ENCODE measurements at regions of chr14 and their contacts with region 1.

Region 1: DNA sequence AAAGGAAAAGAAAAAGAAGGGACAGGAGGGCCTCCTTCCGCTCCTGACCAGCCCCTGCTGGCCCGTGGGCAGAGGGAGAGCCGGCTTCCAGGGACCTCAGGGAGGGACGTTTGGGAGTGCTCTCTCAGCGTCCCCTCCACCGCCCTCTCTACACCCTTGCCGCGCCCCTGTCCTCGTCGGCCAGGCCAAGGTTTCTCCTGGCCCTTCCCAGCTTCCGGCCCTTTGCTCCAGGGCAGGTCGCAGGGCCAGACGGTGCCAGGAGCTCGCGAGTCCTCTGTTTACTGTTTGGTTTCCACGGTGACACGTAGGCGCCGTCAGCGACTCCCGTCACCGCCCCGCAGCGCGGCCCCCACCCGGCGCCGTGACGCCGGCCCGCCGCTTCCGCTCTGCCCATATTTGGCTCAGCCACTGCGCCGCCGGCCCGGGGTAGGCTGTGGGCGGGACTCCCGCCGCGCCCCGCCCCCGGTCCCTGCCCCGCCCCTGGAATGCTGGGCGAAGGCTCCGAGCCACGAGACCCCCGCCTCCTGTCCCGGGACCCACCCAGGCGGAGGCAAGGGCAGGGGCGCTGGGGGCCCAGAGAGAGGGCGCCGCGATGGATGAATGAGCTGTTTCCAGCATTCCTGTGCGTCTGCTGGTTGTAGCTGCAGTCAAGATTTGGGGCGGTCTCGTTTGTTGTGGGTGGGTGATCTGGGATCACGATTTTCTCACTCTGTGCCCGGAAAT is 15.5 kb downstream of the FOS start:
- DNase-seq: peak; percentile 97
- ATAC-seq: peak; percentile 90
- H3K4me3 ChIP-seq: peak overlapping the region; percentile 86
- H3K27ac ChIP-seq: peak overlapping the region; percentile 71
- H3K4me1 ChIP-seq: peaks cover 17% of the 10 kb centered on the region
- H3K27me3 ChIP-seq: no peaks in the 10 kb centered on the region
- CTCF ChIP-seq: no peak

Region 2: GRCh38 chr14:75002392-75003249 is 291.5 kb before region 1 on chr14 and contains the start of gene EIF2B2:
- CTCF ChIA-PET with region 1: no interaction called
- POLR2A ChIA-PET with region 1: no interaction called
- intact Hi-C with region 1: no loop called
- DNase-seq: peak; percentile 97
- ATAC-seq: peak; percentile 98
- H3K4me3 ChIP-seq: peak within 1 kb of the TSS; percentile 89
- H3K27ac ChIP-seq: peak within 1 kb of the TSS; percentile 25
- H3K4me1 ChIP-seq: peaks cover 28% of the 10 kb centered on the region
- H3K27me3 ChIP-seq: no peaks in the 10 kb centered on the region
- CTCF ChIP-seq: no peak
- total RNA-seq, gene EIF2B2: 96.8 and 113 TPM in 2 replicates

Region 3: DNA sequence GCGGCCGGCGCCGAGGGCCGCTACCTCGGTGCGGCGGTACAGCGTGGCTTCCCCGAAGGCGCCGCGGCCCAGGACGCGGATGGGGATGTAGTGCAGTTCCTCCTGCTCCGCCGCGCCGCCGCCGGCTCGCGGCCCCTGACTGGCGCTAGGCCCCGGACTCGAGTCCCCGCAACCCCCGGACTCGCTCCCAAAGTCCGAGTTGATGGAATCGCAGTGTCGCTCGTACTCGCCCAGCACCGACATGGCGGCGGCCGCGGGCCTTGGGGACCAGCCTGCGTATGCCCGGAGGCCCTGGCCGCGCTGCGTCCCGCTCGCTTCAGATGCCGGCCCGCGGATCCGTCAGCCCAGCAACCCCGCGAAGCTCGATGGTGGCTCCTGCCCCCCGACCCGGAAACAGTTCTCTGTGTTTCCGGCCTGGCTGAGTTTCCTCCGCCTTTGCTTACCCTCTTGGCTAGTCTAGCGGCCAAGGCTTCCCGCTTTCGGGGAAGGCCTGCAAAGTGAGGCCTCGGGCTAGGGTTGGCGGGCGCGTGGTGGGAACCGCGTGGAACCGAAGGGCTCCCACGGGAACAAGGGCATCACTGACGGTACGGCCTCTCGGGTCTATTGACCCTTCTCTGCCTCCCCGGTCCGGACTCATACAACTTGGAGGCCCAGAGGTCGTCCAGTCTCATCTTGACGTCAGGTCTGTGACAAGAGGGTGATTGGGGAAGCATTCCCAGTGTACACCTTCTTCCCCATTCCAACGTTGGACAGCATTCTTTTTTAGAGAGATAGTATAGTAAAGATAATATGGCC is 167.2 kb before region 1 on chr14 and contains the start of gene NEK9:
- CTCF ChIA-PET with region 1: interaction called, 3 read pairs
- POLR2A ChIA-PET with region 1: no interaction called
- intact Hi-C with region 1: loop called (anchors 1 kb)
- DNase-seq: peak; percentile 80
- ATAC-seq: peak; percentile 79
- H3K4me3 ChIP-seq: peak within 1 kb of the TSS; percentile 82
- H3K27ac ChIP-seq: peak within 1 kb of the TSS; percentile 51
- H3K4me1 ChIP-seq: peaks cover 33% of the 10 kb centered on the region
- H3K27me3 ChIP-seq: no peaks in the 10 kb centered on the region
- CTCF ChIP-seq: no peak
- total RNA-seq, gene NEK9: 29.6 and 44.5 TPM in 2 replicates

Region 4: GRCh38 chr14:75132382-75133086 is 161.5 kb before region 1 on chr14:
- CTCF ChIA-PET with region 1: no interaction called
- POLR2A ChIA-PET with region 1: no interaction called
- intact Hi-C with region 1: loop called (anchors 1 kb)
- DNase-seq: peak; percentile 93
- ATAC-seq: peak; percentile 89
- H3K4me3 ChIP-seq: no peak overlapping the region
- H3K27ac ChIP-seq: no peak overlapping the region
- H3K4me1 ChIP-seq: no peaks in the 10 kb centered on the region
- H3K27me3 ChIP-seq: no peaks in the 10 kb centered on the region
- CTCF ChIP-seq: peak; percentile 86

Region 5: DNA sequence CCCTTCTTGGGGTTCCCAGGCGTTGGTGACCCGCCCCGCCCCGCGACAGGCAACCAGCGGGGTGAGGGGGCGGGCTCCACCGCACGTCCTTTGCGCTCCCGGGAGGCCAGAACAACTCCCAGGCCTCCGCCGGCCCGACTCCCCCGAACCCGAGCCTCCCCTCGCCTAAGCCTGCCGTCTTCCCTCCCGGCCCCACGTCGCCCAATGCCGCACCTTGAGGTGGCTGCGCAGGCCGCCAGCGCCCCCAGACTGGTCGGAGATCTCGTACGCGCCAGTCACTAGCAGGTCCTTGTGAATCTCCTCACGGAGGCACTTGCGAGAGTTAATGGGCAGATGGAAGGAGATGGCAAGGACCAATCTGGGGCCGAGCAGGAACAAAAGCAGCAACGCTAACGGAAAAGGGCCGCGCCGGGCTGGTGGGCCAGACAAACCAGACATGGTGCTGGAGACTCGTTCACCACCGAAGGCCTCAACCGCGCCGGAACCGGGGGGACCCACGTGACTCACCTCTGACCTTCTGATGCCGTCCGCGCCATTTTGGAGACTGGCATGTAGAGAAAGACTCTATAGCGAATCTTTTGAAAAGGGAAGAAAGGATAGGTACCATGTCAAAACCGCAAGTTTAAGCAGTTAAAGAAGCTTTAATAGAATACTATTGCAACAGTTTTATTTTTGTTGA is 117.8 kb before region 1 on chr14 and contains the start of gene TMED10:
- CTCF ChIA-PET with region 1: no interaction called
- POLR2A ChIA-PET with region 1: interaction called, 21 read pairs
- intact Hi-C with region 1: loop called (anchors 2 kb)
- DNase-seq: no peak
- ATAC-seq: peak; percentile 83
- H3K4me3 ChIP-seq: peak within 1 kb of the TSS; percentile 100
- H3K27ac ChIP-seq: peak within 1 kb of the TSS; percentile 71
- H3K4me1 ChIP-seq: peaks cover 9% of the 10 kb centered on the region; the same call in 1 of the 2 replicates
- H3K27me3 ChIP-seq: no peaks in the 10 kb centered on the region
- CTCF ChIP-seq: no peak
- total RNA-seq, gene TMED10: 246 and 253 TPM in 2 replicates

Region 6: DNA sequence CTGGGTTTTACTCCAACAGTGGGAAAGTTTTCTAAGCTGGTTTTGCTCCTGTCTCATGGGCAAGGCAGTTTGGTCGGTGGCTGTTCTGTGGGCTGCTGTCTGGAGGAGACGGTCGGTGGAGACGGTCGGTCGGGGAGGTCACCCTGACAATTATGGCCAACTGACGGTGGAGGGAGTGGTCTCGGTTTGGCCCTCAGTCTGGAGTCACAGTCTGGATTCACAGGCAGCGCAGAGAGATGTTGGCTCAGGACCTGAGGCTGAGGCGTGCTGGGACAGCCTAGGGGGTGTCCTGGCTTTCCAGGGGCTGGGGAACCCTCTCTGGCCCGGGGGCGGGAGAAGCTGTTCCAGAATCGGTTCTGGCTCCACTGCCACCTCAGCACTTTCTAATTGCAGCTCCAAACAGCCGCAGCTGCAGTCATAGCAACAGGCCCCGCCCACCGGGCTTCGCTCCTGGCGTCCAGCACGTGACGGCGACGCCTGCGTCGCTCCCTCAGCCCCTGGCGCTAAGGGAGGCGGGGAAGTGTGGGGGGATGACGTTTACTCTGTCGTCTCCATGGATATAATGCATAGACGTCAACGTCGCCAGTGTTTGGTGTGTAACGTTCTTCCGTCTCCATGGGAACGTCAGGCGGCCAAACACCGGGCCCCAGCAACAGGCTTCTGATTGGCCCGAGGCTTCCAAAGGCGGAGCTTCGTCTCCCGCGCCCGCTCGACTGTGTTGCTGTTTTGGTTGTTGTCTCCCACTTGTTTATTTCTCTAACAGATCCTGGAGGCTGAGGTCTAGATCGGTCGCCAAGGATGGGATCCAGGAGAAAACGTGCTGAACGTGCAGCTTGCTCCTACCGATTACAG is 35.2 kb before region 1 on chr14:
- CTCF ChIA-PET with region 1: no interaction called
- POLR2A ChIA-PET with region 1: interaction called, 4 read pairs
- intact Hi-C with region 1: loop called (anchors 1 kb)
- DNase-seq: peak; percentile 98
- ATAC-seq: peak; percentile 82
- H3K4me3 ChIP-seq: peak overlapping the region; percentile 65
- H3K27ac ChIP-seq: peak overlapping the region; percentile 73
- H3K4me1 ChIP-seq: peaks cover 40% of the 10 kb centered on the region
- H3K27me3 ChIP-seq: no peaks in the 10 kb centered on the region
- CTCF ChIP-seq: no peak

Region 7: GRCh38 chr14:75267141-75267721 is 26.9 kb before region 1 on chr14:
- CTCF ChIA-PET with region 1: no interaction called
- POLR2A ChIA-PET with region 1: interaction called, 13 read pairs
- intact Hi-C with region 1: no loop called
- DNase-seq: no peak
- ATAC-seq: no peak
- H3K4me3 ChIP-seq: no peak overlapping the region
- H3K27ac ChIP-seq: no peak overlapping the region
- H3K4me1 ChIP-seq: no peaks in the 10 kb centered on the region
- H3K27me3 ChIP-seq: no peaks in the 10 kb centered on the region
- CTCF ChIP-seq: no peak

Region 8: GRCh38 chr14:75278422-75279161 is 15.5 kb before region 1 on chr14 and contains the start of gene FOS:
- CTCF ChIA-PET with region 1: interaction called, 3 read pairs
- POLR2A ChIA-PET with region 1: no interaction called
- intact Hi-C with region 1: loop called (anchors 1 kb)
- DNase-seq: peak; percentile 86
- ATAC-seq: peak; percentile 72
- H3K4me3 ChIP-seq: peak within 1 kb of the TSS; percentile 93
- H3K27ac ChIP-seq: peak within 1 kb of the TSS; percentile 79
- H3K4me1 ChIP-seq: peaks cover 16% of the 10 kb centered on the region; the same call in 1 of the 2 replicates
- H3K27me3 ChIP-seq: no peaks in the 10 kb centered on the region; the same call in 1 of the 2 replicates
- CTCF ChIP-seq: no peak
- total RNA-seq, gene FOS: 99.2 and 103 TPM in 2 replicates